ENCODE measurements at regions of chr1 and their contacts with region 1.

Region 1: GRCh38 chr1:108661030-108661620 is at the start of gene HENMT1:
- DNase-seq: peak; percentile 88 to 90 (median 88)
- H3K4me3 ChIP-seq: peak within 1 kb of the TSS; percentile 47 to 79
- H3K4me3 Mint-ChIP-seq: peak within 1 kb of the TSS; percentile 80 to 88 (median 86)
- H3K27ac ChIP-seq: peak within 1 kb of the TSS; percentile 97
- H3K27ac Mint-ChIP-seq: peak within 1 kb of the TSS; percentile 96 to 98 (median 98)
- H3K4me1 ChIP-seq: peaks cover 25% of the 10 kb centered on the region
- H3K4me1 Mint-ChIP-seq: peaks cover 18 to 41% (median 29%) of the 10 kb centered on the region in 4 donors
- H3K27me3 ChIP-seq: no peaks in the 10 kb centered on the region
- H3K27me3 Mint-ChIP-seq: no peaks in the 10 kb centered on the region
- total RNA-seq, gene HENMT1: 19.1 to 19.3 TPM

Region 2: GRCh38 chr1:108679582-108680213 is 18.6 kb after region 1 on chr1:
- CTCF ChIA-PET with region 1: interaction called, 3 read pairs
- POLR2A ChIA-PET with region 1: interaction called, 25 read pairs
- intact Hi-C with region 1: no loop called
- DNase-seq: no peak
- H3K4me3 ChIP-seq: no peak overlapping the region
- H3K4me3 Mint-ChIP-seq: peak overlapping the region in 7 of 8 donors; percentile 23 to 73 (median 54)
- H3K27ac ChIP-seq: no peak overlapping the region
- H3K27ac Mint-ChIP-seq: peak overlapping the region in 4 of 7 donors; percentile 19 to 80 (median 42)
- H3K4me1 ChIP-seq: peaks cover 9% of the 10 kb centered on the region
- H3K4me1 Mint-ChIP-seq: peaks cover 3 to 8% (median 6%) of the 10 kb centered on the region in 4 donors
- H3K27me3 ChIP-seq: no peaks in the 10 kb centered on the region
- H3K27me3 Mint-ChIP-seq: peaks cover 0 to 2% of the 10 kb centered on the region in 2 donors

Region 3: GRCh38 chr1:108708691-108709660 is 47.9 kb after region 1 on chr1:
- CTCF ChIA-PET with region 1: interaction called, 4 read pairs
- POLR2A ChIA-PET with region 1: interaction called, 36 read pairs
- intact Hi-C with region 1: no loop called
- DNase-seq: peak; percentile 65 to 70 (median 67)
- H3K4me3 ChIP-seq: no peak overlapping the region
- H3K4me3 Mint-ChIP-seq: peak overlapping the region in 1 of 8 donors; percentile 7
- H3K27ac ChIP-seq: no peak overlapping the region
- H3K27ac Mint-ChIP-seq: peak overlapping the region in 6 of 7 donors; percentile 32 to 63 (median 61)
- H3K4me1 ChIP-seq: peaks cover 35% of the 10 kb centered on the region
- H3K4me1 Mint-ChIP-seq: peaks cover 19 to 45% (median 35%) of the 10 kb centered on the region in 4 donors
- H3K27me3 ChIP-seq: no peaks in the 10 kb centered on the region
- H3K27me3 Mint-ChIP-seq: no peaks in the 10 kb centered on the region

Measured in CD4-positive, alpha-beta memory T cell (primary cell).